ENCODE measurements at regions of chr7 and their contacts with region 1.

Region 1: DNA sequence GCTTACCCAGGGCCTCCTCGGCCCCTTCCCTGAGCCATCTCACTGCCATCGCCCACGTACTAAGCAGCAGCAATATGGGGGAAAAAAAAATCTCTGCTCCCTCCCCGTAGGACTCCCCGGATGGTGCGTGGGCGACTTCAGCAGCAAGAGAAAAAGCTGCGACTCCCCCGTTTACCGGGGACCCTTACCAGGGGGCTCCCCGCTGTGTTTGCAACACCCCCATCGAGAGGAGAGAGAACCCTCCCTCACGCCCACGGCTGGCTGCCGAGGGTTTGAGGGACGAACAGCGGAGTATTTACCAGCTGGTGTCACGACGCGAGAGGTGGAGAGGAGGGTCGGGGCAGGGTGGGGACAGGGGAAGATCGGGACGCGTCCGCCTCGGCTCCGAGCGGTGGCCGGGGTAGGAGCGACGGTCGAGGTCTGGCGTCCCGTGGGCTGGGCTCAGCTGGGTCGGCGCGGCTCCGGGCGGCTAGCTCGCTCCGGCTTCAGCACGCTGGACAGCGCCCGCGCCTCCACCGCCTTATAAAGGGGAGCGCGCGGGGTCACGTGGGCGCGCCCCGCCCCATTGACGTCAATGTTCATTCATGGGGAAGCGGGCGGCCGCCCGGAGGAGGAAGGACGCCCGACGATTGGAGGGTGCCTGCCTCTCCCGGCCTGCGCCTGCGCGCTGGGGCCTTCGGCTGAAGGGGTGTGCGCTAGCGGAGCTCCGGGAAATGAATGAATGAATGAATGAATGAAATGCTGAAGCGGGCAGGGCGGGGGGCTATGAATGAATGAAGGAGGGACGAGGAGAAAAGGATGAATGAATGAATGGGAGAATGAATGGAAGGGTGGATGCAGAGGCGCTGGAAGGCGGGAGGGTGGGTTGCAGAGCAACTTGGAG is at the start of gene VGF:
- DNase-seq: peak; percentile 83 to 96 (median 92)
- ATAC-seq: peak; percentile 79
- H3K4me3 ChIP-seq: no peak within 1 kb of the TSS
- H3K4me3 Mint-ChIP-seq: peak within 1 kb of the TSS; percentile 71
- H3K27ac ChIP-seq: no peak within 1 kb of the TSS
- H3K27ac Mint-ChIP-seq: no peak within 1 kb of the TSS
- H3K4me1 ChIP-seq: peaks cover 61% of the 10 kb centered on the region
- H3K4me1 Mint-ChIP-seq: peaks cover 39% of the 10 kb centered on the region
- H3K27me3 ChIP-seq: peaks cover 51 to 81% of the 10 kb centered on the region in 2 experiments
- H3K27me3 Mint-ChIP-seq: peaks cover 60% of the 10 kb centered on the region
- CTCF ChIP-seq: no peak
- total RNA-seq, gene VGF: not detected

Region 2: GRCh38 chr7:100889761-100890634 is 275.3 kb before region 1 on chr7:
- CTCF ChIA-PET with region 1: no interaction called
- POLR2A ChIA-PET with region 1: no interaction called
- intact Hi-C with region 1: loop called in 1 of 2 experiments (anchors 10 kb)
- DNase-seq: peak; percentile 79 to 97 (median 91)
- ATAC-seq: peak; percentile 82
- H3K4me3 ChIP-seq: peak overlapping the region; percentile 65 to 90
- H3K4me3 Mint-ChIP-seq: peak overlapping the region; percentile 87
- H3K27ac ChIP-seq: peak overlapping the region; percentile 22 to 44
- H3K27ac Mint-ChIP-seq: peak overlapping the region; percentile 72
- H3K4me1 ChIP-seq: peaks cover 40% of the 10 kb centered on the region
- H3K4me1 Mint-ChIP-seq: peaks cover 42% of the 10 kb centered on the region
- H3K27me3 ChIP-seq: peaks cover 0 to 20% of the 10 kb centered on the region in 2 experiments
- H3K27me3 Mint-ChIP-seq: peaks cover 13% of the 10 kb centered on the region
- CTCF ChIP-seq: no peak

Region 3: DNA sequence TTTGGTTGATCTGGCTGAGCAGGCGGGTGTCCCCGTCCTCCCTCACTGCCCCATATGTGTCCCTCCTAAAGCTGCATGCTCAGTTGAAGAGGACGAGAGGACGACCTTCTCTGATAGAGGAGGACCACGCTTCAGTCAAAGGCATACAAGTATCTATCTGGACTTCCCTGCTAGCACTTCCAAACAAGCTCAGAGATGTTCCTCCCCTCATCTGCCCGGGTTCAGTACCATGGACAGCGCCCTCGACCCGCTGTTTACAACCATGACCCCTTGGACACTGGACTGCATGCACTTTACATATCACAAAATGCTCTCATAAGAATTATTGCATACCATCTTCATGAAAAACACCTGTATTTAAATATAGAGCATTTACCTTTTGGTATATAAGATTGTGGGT is 107.0 kb before region 1 on chr7:
- CTCF ChIA-PET with region 1: no interaction called
- POLR2A ChIA-PET with region 1: no interaction called
- intact Hi-C with region 1: no loop called
- DNase-seq: peak in 8 of 9 experiments; percentile 24 to 66 (median 58)
- ATAC-seq: no peak
- H3K4me3 ChIP-seq: no peak overlapping the region
- H3K4me3 Mint-ChIP-seq: no peak overlapping the region
- H3K27ac ChIP-seq: no peak overlapping the region
- H3K27ac Mint-ChIP-seq: no peak overlapping the region
- H3K4me1 ChIP-seq: no peaks in the 10 kb centered on the region
- H3K4me1 Mint-ChIP-seq: no peaks in the 10 kb centered on the region
- H3K27me3 ChIP-seq: peaks cover 0 to 19% of the 10 kb centered on the region in 2 experiments
- H3K27me3 Mint-ChIP-seq: peaks cover 41% of the 10 kb centered on the region
- CTCF ChIP-seq: no peak

Region 4: GRCh38 chr7:101108330-101108857 is 56.9 kb before region 1 on chr7:
- CTCF ChIA-PET with region 1: no interaction called
- POLR2A ChIA-PET with region 1: no interaction called
- intact Hi-C with region 1: no loop called
- DNase-seq: no peak
- ATAC-seq: no peak
- H3K4me3 ChIP-seq: no peak overlapping the region
- H3K4me3 Mint-ChIP-seq: no peak overlapping the region
- H3K27ac ChIP-seq: no peak overlapping the region
- H3K27ac Mint-ChIP-seq: no peak overlapping the region
- H3K4me1 ChIP-seq: no peaks in the 10 kb centered on the region
- H3K4me1 Mint-ChIP-seq: no peaks in the 10 kb centered on the region
- H3K27me3 ChIP-seq: no peaks in the 10 kb centered on the region
- H3K27me3 Mint-ChIP-seq: peaks cover 26% of the 10 kb centered on the region
- CTCF ChIP-seq: no peak

Region 5: DNA sequence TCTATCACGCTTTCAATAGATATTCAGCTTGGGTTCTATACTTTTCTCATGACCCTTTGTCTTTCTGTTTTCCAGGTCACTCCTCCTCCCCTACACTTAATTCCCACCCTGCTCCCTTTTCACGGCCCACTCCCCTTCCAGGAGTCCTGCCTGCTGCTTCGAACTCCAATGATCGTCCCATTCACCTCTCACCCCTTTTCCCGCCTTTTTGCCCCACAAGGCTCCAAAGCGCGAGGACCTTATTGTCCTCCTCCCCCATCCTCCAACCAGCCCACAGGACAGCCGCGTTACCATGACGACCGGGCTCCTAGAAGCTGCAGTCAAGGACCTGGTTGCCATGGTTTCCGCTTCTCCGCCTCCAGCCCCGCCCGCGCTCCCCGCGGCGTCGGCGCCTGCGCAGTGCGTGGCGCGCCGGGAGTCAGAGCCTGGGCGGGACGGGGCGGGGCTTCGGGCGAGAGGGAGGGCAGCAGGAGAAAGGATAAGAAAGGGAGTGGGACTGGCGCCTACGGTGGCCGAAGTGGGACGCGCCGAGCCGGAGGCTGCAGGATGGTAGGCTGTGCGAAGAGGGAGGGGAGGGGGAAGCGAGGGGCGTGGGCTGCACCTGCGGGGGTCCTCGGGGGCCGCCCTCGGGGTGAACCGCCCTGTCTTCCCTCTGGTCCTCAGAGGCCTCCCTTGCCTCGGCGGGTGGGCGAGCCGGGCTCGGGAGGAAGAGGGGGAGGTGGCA is 11.2 kb before region 1 on chr7 and contains the start of gene AP1S1:
- CTCF ChIA-PET with region 1: interaction called, 23 read pairs
- POLR2A ChIA-PET with region 1: interaction called, 8 read pairs
- intact Hi-C with region 1: loop called in 1 of 2 experiments (anchors 1 kb)
- DNase-seq: peak; percentile 76 to 96 (median 87)
- ATAC-seq: peak; percentile 88
- H3K4me3 ChIP-seq: peak within 1 kb of the TSS; percentile 61 to 77
- H3K4me3 Mint-ChIP-seq: peak within 1 kb of the TSS; percentile 88
- H3K27ac ChIP-seq: no peak within 1 kb of the TSS
- H3K27ac Mint-ChIP-seq: peak within 1 kb of the TSS; percentile 47
- H3K4me1 ChIP-seq: peaks cover 12% of the 10 kb centered on the region
- H3K4me1 Mint-ChIP-seq: peaks cover 11% of the 10 kb centered on the region
- H3K27me3 ChIP-seq: no peaks in the 10 kb centered on the region
- H3K27me3 Mint-ChIP-seq: peaks cover 9% of the 10 kb centered on the region
- CTCF ChIP-seq: no peak
- total RNA-seq, gene AP1S1: 2.1 to 2.2 TPM

Region 6: DNA sequence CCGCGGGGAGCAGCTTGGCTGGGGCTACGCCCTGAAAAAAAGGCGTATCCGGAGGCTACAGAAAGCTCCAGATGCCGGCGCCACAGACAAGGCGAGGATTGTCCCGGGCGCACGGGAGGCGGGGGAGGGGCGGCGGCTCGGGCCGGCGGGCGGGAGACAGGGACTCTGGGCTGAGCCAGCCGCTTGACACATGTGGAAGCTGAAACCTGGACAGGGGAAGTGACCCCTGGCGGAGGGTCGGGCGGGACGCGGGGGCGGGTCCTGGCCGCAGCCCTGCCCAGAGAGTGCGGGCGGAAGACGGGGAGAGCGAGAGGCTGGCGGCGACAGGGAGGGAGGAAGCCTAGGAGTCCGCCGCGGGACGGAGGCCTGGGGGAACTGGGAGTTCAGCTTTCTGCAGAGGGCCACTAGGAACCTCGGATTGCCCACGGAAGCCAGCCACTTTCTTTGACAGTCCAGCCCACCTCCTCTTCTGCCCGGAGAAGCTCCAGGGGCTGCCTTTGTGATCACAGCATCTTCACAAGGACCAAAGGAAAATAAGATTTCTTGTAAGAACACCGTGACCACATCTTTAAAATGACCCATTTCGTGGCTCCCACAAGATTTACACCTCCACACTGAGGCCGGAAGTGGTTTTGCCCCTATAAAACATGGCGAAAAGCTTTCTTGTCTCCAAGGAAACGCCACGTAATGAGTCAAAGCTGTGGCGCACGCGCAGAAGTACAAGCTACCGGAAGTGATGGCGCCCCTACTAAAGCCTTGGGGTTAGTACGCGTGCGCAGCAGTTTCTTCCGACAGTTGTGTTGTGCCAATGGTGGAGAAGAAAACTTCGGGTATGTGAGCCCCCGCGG is 52.3 kb after region 1 on chr7 and contains the starts of genes PLOD3 and ZNHIT1:
- CTCF ChIA-PET with region 1: interaction called, 4 read pairs
- POLR2A ChIA-PET with region 1: interaction called, 3 read pairs
- intact Hi-C with region 1: loop called in 1 of 2 experiments (anchors 5 kb)
- DNase-seq: peak; percentile 89 to 99 (median 96)
- ATAC-seq: peak; percentile 75
- H3K4me3 ChIP-seq: peak within 1 kb of the TSS; percentile 82 to 91
- H3K4me3 Mint-ChIP-seq: peak within 1 kb of the TSS; percentile 94
- H3K27ac ChIP-seq: peak within 1 kb of the TSS; percentile 71 to 84
- H3K27ac Mint-ChIP-seq: peak within 1 kb of the TSS; percentile 91
- H3K4me1 ChIP-seq: peaks cover 29% of the 10 kb centered on the region
- H3K4me1 Mint-ChIP-seq: peaks cover 33% of the 10 kb centered on the region
- H3K27me3 ChIP-seq: no peaks in the 10 kb centered on the region
- H3K27me3 Mint-ChIP-seq: no peaks in the 10 kb centered on the region
- CTCF ChIP-seq: no peak
- total RNA-seq, gene PLOD3: 6.6 to 7.5 TPM
- total RNA-seq, gene ZNHIT1: 23.7 to 24.6 TPM